MCF 10A (cell line): ENCODE measurements at regions of chr3 and their contacts with region 1.

Region 1: DNA sequence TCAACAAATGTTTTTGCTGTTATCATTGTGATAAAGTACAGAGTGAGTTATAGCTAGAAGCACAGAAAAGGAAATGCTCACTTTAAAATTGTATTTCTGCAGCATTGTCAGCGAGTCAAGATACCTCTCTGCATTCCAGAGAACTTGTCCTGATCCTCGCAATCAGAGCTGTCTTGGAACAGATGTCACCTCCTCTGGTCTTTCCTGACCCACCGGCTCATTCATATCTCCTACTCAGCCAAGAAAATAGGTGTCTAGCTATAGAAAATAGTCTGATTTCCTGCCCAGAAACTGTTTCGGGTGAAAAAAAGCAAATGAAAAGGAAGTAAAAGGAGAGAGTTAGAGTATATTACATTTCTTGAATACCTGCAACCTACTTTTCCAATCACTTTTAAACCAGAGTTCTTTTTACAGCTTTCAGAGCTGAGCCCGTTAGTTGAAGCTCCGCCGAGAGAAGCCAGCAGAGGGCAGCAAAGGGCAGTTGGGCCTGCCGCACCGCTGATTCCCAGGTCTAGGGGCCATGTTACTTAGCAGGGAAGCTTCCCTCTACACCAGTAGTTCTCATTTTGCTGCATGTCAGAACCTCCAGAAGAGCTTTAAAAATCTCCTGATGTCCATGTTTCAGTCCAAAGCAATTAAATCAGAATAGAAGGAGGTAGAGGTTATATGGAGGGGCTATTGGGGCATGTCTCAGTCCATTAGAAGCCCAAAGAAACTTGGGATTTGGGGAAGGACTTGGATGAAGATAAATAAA is 185.7 kb upstream of the THRB start:
- DNase-seq: peak; percentile 69
- H3K4me3 Mint-ChIP-seq: no peak overlapping the region
- H3K27ac Mint-ChIP-seq: no peak overlapping the region
- H3K4me1 Mint-ChIP-seq: peaks cover 20% of the 10 kb centered on the region
- H3K27me3 Mint-ChIP-seq: no peaks in the 10 kb centered on the region
- CTCF ChIP-seq: peak; percentile 47

Region 2: DNA sequence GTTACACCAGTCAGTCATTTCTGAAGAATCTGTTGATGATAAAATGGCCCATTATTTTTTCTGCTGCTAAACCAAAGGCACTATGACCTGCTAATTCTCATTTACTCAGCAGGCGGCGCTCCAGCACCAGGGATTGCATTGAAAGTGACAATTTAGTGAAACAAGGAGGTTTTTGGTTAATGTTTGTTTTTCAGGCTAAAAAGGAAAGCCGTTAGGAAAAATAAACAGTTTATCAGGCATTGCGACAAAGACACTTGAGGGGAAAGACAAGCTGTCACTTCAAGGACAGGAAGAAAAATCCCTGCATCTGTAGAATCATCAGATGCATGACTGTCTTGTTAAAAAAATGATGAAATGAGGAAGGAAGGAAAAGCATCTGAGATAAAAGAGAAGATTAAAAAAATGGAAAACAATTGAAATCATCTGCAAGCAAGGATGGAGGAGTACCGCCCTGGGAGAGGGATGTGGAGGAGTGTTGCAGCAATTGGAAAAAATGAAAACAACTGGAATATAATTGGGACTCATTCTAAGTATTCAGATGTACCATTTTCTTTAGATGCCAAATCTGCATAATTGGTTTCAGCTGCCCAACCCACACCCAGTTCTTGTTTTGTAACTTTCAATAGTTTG is 681.3 kb before region 1 on chr3:
- CTCF ChIA-PET with region 1: interaction called, 28 read pairs
- POLR2A ChIA-PET with region 1: no interaction called
- intact Hi-C with region 1: loop called (anchors 1 kb)
- DNase-seq: peak; percentile 73
- H3K4me3 Mint-ChIP-seq: no peak overlapping the region
- H3K27ac Mint-ChIP-seq: no peak overlapping the region
- H3K4me1 Mint-ChIP-seq: peaks cover 5% of the 10 kb centered on the region
- H3K27me3 Mint-ChIP-seq: no peaks in the 10 kb centered on the region
- CTCF ChIP-seq: peak; percentile 95

Region 3: DNA sequence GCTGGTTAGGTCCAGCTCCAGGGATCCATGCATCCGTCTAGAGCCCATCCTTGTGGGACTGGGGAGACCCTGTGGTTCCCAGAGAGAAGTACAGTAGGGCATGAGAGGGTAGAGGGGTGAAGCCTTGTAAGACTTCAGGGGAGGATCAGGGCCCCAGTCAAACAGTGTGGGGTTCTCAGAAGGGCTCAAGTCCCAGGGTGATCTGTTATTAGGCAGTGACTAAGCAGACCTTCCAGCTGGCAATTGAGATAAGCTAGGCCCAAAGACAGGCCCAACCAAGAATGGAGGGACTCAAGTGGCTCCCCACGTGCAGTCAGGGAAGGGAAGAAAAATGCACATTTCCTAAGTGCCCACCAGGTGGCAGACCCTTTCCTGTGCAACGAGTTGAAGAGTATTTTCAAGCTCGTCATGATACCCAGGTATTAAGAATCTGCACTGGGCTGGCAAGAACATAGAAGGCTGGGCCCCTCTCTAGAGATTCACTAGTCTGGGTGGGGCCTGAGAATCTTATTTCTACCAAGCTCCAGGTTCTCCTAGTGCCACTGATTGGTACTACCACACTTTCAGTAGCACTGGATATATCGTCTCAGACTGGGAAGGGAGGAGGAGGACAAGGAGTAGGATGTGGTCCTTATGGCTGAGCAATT is 494.5 kb before region 1 on chr3:
- CTCF ChIA-PET with region 1: interaction called, 8 read pairs
- POLR2A ChIA-PET with region 1: interaction called, 4 read pairs
- intact Hi-C with region 1: loop called (anchors 1 kb)
- DNase-seq: peak; percentile 63
- H3K4me3 Mint-ChIP-seq: no peak overlapping the region
- H3K27ac Mint-ChIP-seq: peak overlapping the region; percentile 80
- H3K4me1 Mint-ChIP-seq: no peaks in the 10 kb centered on the region
- H3K27me3 Mint-ChIP-seq: no peaks in the 10 kb centered on the region
- CTCF ChIP-seq: peak; percentile 74

Region 4: GRCh38 chr3:24264748-24265158 is 415.6 kb before region 1 on chr3:
- CTCF ChIA-PET with region 1: interaction called, 28 read pairs
- POLR2A ChIA-PET with region 1: no interaction called
- intact Hi-C with region 1: loop called (anchors 1 kb)
- DNase-seq: peak; percentile 53
- H3K4me3 Mint-ChIP-seq: no peak overlapping the region
- H3K27ac Mint-ChIP-seq: no peak overlapping the region
- H3K4me1 Mint-ChIP-seq: peaks cover 5% of the 10 kb centered on the region
- H3K27me3 Mint-ChIP-seq: no peaks in the 10 kb centered on the region
- CTCF ChIP-seq: peak; percentile 71

Region 5: GRCh38 chr3:24640330-24640877 is 40.0 kb before region 1 on chr3:
- CTCF ChIA-PET with region 1: interaction called, 5 read pairs
- POLR2A ChIA-PET with region 1: no interaction called
- intact Hi-C with region 1: loop called (anchors 2 kb)
- DNase-seq: peak; percentile 60
- H3K4me3 Mint-ChIP-seq: no peak overlapping the region
- H3K27ac Mint-ChIP-seq: peak overlapping the region; percentile 20
- H3K4me1 Mint-ChIP-seq: peaks cover 7% of the 10 kb centered on the region
- H3K27me3 Mint-ChIP-seq: no peaks in the 10 kb centered on the region
- CTCF ChIP-seq: peak; percentile 71

Region 6: DNA sequence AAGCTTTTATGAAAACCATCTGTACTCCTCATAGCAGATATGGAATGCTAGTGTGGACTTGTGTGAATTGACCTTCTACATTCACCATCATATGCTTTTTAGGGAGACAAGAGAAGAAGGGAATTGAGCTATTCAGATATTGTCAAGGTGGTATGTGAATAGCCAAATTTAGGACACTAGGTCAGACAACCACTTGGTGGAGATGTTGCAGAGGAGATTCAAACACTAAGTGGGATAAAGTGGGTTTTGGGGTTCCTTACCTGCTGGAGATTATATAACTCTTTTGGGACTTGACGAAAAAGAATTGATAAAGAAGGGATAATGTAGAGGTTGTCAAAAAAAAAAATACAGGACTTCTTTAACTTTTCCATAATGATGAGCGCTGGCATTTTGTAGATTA is 46.0 kb after region 1 on chr3:
- CTCF ChIA-PET with region 1: no interaction called
- POLR2A ChIA-PET with region 1: no interaction called
- intact Hi-C with region 1: no loop called
- DNase-seq: no peak
- H3K4me3 Mint-ChIP-seq: no peak overlapping the region
- H3K27ac Mint-ChIP-seq: no peak overlapping the region
- H3K4me1 Mint-ChIP-seq: peaks cover 24% of the 10 kb centered on the region
- H3K27me3 Mint-ChIP-seq: no peaks in the 10 kb centered on the region
- CTCF ChIP-seq: no peak

Region 7: DNA sequence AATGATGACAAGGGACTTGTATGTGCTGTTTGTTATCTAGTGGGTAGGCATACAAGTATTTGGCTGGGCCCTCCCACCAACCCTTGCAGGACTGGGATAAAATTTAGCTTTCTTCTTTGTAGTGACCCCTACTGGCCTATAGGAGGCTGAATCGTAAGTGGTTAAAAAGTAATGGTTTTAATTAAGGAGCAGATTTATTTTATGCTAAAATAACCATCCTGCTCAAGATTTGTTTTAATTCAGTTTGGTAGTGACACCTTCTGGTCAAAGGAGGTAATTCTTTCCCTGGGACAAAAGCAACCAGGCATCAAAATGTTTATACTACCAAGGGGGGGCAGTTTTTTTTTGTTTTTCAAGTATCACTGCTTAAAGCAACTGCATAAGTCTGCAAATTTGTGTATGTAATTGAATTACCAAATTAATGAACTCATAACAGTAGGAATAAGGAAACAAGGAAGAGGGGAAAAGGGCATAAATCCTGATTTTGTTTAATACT is 913.7 kb after region 1 on chr3:
- CTCF ChIA-PET with region 1: no interaction called
- POLR2A ChIA-PET with region 1: no interaction called
- intact Hi-C with region 1: loop called (anchors 10 kb)
- DNase-seq: peak; percentile 64
- H3K4me3 Mint-ChIP-seq: no peak overlapping the region
- H3K27ac Mint-ChIP-seq: no peak overlapping the region
- H3K4me1 Mint-ChIP-seq: peaks cover 5% of the 10 kb centered on the region
- H3K27me3 Mint-ChIP-seq: no peaks in the 10 kb centered on the region
- CTCF ChIP-seq: peak; percentile 60